Dendritic cell treated with granulocyte-macrophage colony-stimulating factor and Interleukin-4, amounts not matched to agents 40 ng/mL and 50 ng/mL, for 4 days (primary cell): ENCODE measurements at regions of chr1 and their contacts with region 1.

Region 1: DNA sequence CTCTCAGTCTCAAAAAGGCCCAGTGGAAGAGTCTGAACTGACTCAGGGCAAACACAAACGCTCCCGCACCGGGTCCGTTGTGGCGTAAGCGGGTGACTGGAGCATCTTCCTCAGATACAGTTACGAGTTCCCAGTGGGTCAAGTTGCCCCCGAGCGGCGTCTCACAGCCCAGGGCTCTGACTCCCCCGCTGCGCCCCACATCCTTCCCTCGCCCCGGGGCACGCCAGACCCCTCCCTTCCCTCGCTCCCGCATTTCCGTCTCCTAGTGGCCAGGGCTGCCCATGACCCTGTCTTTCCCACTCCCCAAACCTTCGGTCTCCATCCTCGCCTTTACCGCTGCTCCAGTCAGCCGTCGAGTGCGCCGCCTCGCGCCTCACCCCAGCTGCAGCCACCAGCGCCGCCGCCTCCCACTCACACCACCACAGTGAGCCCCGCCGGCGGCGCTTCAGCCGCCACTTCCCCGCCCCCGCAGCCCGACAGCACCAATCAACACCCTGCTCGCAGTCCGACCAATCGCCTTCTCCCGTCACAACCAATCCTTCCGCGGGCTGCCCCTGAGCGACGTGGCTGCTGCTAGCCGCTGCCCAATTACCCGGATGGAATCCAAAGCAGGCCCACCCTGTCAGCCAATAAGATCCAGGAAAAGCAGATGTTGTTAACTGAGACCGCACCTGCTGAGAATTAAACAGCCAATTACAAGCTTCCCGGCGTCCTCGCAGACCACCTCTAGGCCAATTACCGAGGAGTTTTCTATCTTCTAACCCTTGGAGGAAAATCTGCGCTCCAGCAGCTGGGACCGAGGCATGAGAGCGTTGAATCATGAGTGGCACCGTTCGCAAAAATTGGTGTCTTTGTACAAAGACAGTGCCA is at the start of gene TDRKH:
- H3K4me3 Mint-ChIP-seq: peak within 1 kb of the TSS; percentile 95
- H3K27ac Mint-ChIP-seq: peak within 1 kb of the TSS; percentile 91
- H3K4me1 Mint-ChIP-seq: peaks cover 40% of the 10 kb centered on the region
- H3K27me3 Mint-ChIP-seq: no peaks in the 10 kb centered on the region

Region 2: GRCh38 chr1:151762941-151763921 is 27.1 kb before region 1 on chr1 and contains the start of gene MRPL9:
- intact Hi-C with region 1: loop called (anchors 2 kb)
- H3K4me3 Mint-ChIP-seq: peak within 1 kb of the TSS; percentile 91
- H3K27ac Mint-ChIP-seq: peak within 1 kb of the TSS; percentile 94
- H3K4me1 Mint-ChIP-seq: peaks cover 50% of the 10 kb centered on the region
- H3K27me3 Mint-ChIP-seq: no peaks in the 10 kb centered on the region